HEK293 (cell line): ENCODE measurements at regions of chr9 and their contacts with region 1.

Region 1: GRCh38 chr9:128275996-128276573 is at the starts of genes GOLGA2 and SWI5:
- H3K4me3 ChIP-seq: peak within 1 kb of the TSS; percentile 83
- H3K27ac ChIP-seq: peak within 1 kb of the TSS; percentile 51; the same call in 1 of the 2 replicates
- H3K4me1 ChIP-seq: no peaks in the 10 kb centered on the region
- CTCF ChIP-seq: no peak

Region 2: GRCh38 chr9:128136816-128137793 is 139.0 kb before region 1 on chr9:
- CTCF ChIA-PET with region 1: no interaction called
- POLR2A ChIA-PET with region 1: no interaction called
- H3K4me3 ChIP-seq: no peak overlapping the region
- H3K27ac ChIP-seq: no peak overlapping the region
- H3K4me1 ChIP-seq: no peaks in the 10 kb centered on the region
- CTCF ChIP-seq: no peak

Region 3: DNA sequence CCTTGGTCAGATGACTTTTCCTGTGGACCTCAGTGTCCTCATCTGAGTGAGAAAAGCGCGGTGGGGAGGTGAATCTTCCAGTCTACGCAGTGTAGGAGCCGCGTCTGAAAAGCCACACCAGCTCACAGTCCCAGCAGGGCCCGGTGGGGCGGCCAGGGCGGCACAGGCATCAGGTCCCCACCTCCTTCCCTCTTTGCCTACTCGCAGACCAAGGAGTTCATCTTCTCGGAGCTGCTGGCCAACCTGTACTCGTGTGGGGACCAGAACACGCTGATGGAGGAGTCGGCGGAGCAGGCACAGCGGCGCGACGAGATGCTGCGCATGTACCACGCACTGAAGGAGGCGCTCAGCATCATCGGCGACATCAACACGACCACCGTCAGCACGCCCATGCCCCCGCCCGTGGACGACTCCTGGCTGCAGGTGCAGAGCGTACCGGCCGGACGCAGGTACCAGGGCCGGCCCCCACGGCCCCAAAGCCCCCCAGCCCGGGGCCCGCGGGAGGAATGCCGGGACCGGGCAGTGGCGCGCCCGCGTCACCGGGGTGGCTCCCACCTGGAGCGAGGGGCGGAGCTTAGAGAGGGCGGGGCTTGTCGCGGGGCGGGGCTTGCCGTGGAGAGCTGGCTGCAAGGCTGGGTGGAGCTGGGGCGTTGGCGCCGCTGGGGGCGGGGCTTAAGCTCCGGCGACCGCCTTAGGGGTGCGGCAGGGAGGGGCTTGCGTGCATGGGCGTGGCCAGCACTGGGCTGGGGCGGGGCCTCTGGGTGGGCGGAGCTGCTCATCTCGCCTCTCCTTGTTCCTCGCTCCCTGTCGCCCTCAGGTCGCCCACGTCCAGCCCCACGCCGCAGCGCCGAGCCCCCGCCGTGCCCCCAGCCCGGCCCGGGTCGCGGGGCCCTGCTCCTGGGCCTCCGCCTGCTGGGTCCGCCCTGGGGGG is 25.9 kb before region 1 on chr9:
- CTCF ChIA-PET with region 1: interaction called, 9 read pairs
- POLR2A ChIA-PET with region 1: interaction called, 19 read pairs
- H3K4me3 ChIP-seq: peak overlapping the region; percentile 25
- H3K27ac ChIP-seq: no peak overlapping the region
- H3K4me1 ChIP-seq: no peaks in the 10 kb centered on the region
- CTCF ChIP-seq: no peak

Region 4: DNA sequence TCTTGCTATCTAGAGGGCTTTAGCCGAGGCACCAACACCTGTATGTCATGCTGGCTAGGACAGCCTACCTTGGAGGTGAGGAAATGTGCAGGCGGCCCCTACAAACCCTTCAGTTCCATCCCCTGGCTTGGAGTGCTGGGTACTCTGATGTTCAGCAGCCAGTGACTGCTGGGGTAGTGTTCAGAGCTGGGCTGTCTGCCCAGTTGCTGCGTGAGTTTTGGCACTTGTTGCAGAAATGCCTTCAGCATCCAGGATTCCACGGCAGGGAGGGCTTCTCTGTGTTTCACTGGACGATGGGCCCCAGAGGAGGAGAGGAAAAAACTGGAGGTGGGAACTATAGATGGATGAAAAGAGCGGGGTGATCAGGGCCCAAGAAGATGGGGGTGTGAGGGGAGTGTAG is 10.4 kb after region 1 on chr9:
- CTCF ChIA-PET with region 1: interaction called, 3 read pairs
- POLR2A ChIA-PET with region 1: interaction called, 23 read pairs
- H3K4me3 ChIP-seq: no peak overlapping the region
- H3K27ac ChIP-seq: no peak overlapping the region
- H3K4me1 ChIP-seq: no peaks in the 10 kb centered on the region
- CTCF ChIP-seq: no peak